Activated naive CD4-positive, alpha-beta T cell treated with anti-CD3 and anti-CD28 coated beads for 36 hours (primary cell): ENCODE measurements at regions of chr17 and their contacts with region 1.

Region 1: DNA sequence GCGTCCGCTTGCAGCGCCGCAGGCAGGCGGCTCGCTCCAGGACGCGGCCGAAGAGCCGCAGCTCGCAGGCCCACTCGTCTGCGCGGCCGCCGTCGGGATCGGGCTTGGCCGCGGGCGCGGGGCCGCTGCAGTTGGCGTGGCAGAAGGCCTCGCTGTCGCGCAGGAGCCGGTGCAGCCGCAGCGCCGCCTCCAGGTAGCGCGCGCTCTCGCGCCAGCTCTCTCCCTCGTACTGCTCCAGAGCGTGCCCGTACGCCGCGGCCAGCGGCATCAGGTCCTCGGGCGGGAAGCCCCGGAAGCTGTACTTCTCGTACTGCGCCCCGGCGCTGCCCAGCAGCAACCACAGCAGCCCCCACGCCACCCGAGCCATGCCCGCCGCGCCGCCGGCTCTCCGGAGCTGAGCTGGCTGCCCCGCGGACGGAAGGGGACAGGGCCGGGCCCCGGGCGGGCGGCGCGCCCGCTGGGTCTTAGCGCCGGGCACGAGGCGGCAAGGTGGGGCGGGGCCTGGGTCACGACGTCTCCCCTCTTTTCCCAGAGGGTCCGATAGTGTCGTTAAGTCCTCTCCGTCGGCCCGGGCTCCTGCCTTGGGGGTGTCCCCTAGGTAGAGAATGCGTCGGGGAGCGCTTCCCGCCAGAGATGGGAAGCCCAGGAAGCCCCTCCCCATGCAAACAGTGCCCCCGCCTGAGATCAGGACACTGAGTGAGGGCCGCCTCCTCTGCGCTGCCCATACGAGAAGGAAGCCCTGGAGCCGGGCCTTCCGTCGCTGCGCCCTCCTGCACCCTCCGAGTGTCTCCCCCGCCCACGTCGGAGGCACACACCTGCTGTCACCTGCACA is at the start of gene P3H4:
- DNase-seq: peak; percentile 76
- H3K4me3 Mint-ChIP-seq: peak within 1 kb of the TSS; percentile 75
- H3K27ac Mint-ChIP-seq: no peak within 1 kb of the TSS
- H3K4me1 Mint-ChIP-seq: peaks cover 18% of the 10 kb centered on the region
- H3K27me3 Mint-ChIP-seq: peaks cover 10% of the 10 kb centered on the region
- total RNA-seq, gene P3H4: 1.2 to 1.5 TPM

Region 2: DNA sequence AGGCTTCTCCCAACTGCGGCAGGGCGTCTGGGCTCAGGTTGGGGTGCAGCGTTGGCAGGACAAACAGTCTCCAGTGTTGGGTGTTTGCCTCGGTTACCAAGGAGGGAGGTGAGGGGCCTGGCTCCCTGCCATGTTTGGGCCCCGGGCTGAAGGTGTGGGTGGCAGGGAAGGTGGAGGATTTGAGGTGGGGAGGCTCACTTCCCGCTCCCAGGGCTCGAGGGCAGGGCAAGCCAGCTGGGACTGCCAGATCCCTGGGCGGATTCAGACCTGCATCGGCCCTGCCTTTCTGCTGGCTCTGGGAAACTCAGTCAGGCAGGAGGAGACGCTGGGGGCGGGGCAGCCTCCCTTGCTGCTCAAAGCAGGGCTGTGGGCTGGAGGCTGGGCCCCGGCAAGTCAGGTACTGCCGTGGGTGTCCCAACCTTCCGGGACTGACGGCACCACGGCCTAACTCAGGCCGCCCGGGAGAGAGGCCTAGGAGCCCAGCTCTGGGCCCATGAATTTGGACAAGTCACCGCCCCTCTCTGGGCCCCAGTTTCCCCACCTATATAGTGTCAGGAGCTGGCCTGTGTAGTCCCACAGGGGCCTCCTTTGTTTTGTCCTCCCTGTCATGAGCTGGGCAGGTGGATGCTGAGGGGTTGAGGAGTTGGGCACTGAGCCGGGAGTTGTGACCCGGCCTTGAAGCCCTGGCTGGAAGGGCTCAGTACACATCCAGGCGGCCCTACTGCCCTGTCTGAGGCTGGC is 156.0 kb before region 1 on chr17:
- CTCF ChIA-PET with region 1: no interaction called
- intact Hi-C with region 1: no loop called
- DNase-seq: no peak
- H3K4me3 Mint-ChIP-seq: no peak overlapping the region
- H3K27ac Mint-ChIP-seq: no peak overlapping the region
- H3K4me1 Mint-ChIP-seq: no peaks in the 10 kb centered on the region
- H3K27me3 Mint-ChIP-seq: no peaks in the 10 kb centered on the region

Region 3: DNA sequence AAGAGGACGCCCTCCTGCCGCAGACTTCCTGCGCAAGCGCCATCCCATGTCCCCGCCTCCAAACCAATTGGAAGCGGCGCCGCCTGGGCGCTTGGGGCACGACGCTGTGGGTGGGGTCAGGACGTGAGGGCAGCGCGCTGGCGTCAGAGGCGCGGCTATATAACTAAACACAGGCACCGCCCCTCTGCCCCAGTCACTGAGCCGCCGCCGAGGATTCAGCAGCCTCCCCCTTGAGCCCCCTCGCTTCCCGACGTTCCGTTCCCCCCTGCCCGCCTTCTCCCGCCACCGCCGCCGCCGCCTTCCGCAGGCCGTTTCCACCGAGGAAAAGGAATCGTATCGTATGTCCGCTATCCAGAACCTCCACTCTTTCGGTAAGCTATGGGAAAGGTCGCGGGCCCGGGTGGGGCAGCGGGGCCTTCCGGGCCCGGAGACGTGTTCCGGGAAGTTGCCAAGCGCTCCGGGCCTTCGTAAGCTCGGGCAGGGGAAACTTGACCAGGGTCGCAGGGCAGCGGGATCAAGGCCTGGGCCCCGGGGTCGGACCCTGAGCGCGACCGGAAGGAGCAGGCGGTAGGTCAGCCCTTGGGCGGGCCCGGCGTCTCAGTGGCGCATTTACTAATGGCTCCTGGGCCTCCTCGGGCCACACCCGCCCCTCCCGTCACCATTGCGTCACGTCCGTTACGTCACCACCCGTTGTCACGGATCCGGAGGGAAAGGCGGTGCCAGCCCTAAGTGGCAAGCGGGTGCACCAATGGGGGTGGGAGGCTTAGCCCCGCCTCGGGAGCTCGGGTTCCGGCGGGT is 122.9 kb before region 1 on chr17 and contains the start of gene EIF1:
- CTCF ChIA-PET with region 1: no interaction called
- intact Hi-C with region 1: loop called (anchors 5 kb)
- DNase-seq: peak; percentile 100
- H3K4me3 Mint-ChIP-seq: peak within 1 kb of the TSS; percentile 97
- H3K27ac Mint-ChIP-seq: peak within 1 kb of the TSS; percentile 99
- H3K4me1 Mint-ChIP-seq: peaks cover 26% of the 10 kb centered on the region
- H3K27me3 Mint-ChIP-seq: no peaks in the 10 kb centered on the region
- total RNA-seq, gene EIF1: 1,206 to 1,253 TPM

Region 4: DNA sequence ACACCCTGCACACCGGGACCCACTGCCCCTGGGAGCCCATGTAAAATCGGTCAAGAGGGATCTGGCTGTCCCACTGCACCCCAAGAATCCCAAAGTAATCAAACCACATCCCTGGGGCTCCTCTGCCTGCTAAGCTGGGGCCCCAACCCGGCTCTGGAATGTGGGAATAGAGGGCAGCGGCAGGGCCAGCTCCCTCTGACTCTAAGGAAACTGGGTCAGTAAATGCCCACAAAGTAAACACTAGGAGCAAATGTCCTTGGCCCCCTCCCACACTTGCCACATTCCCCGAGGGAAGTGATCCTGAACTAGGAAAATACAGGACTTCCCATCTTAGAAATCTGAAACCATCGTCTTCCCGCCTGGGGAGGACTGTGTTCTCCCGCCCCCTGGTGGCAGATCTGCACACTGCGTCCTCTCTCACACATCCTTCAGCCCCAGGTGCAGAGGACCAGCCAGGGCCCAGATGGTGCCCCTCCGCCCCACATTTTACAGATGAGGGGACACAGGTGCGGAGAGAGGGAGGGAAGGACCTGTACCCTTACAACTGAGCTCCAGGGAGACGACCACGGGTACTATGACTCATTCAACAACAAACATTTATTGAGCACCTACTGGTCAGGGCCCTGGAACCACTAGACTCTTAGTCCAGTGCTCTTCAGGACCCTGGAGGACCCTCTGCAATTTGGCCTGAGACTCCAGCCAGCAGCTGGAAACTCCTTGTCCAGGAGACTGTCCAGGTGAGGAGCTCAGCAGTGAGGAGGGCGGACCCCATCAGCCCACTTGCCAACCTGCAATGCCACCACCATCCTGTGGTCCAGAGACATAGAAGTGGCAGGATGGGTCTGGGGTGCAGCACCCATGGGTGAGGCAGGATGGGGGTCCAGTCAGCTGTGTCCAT is 10.1 kb before region 1 on chr17:
- CTCF ChIA-PET with region 1: interaction called, 21 read pairs
- intact Hi-C with region 1: no loop called
- DNase-seq: peak; percentile 84
- H3K4me3 Mint-ChIP-seq: no peak overlapping the region
- H3K27ac Mint-ChIP-seq: no peak overlapping the region
- H3K4me1 Mint-ChIP-seq: no peaks in the 10 kb centered on the region
- H3K27me3 Mint-ChIP-seq: no peaks in the 10 kb centered on the region

Region 5: GRCh38 chr17:41910701-41911391 is 99.1 kb after region 1 on chr17:
- CTCF ChIA-PET with region 1: no interaction called
- intact Hi-C with region 1: no loop called
- DNase-seq: no peak
- H3K4me3 Mint-ChIP-seq: no peak overlapping the region
- H3K27ac Mint-ChIP-seq: no peak overlapping the region
- H3K4me1 Mint-ChIP-seq: peaks cover 15% of the 10 kb centered on the region
- H3K27me3 Mint-ChIP-seq: no peaks in the 10 kb centered on the region